ENCODE measurements at regions of chr14 and their contacts with region 1.

Region 1: GRCh38 chr14:76050797-76051392 is 65.3 kb downstream of the IFT43 start:
- DNase-seq: peak; percentile 89
- H3K4me3 Mint-ChIP-seq: no peak overlapping the region
- H3K27ac Mint-ChIP-seq: no peak overlapping the region
- H3K4me1 Mint-ChIP-seq: no peaks in the 10 kb centered on the region
- H3K27me3 Mint-ChIP-seq: no peaks in the 10 kb centered on the region

Region 2: DNA sequence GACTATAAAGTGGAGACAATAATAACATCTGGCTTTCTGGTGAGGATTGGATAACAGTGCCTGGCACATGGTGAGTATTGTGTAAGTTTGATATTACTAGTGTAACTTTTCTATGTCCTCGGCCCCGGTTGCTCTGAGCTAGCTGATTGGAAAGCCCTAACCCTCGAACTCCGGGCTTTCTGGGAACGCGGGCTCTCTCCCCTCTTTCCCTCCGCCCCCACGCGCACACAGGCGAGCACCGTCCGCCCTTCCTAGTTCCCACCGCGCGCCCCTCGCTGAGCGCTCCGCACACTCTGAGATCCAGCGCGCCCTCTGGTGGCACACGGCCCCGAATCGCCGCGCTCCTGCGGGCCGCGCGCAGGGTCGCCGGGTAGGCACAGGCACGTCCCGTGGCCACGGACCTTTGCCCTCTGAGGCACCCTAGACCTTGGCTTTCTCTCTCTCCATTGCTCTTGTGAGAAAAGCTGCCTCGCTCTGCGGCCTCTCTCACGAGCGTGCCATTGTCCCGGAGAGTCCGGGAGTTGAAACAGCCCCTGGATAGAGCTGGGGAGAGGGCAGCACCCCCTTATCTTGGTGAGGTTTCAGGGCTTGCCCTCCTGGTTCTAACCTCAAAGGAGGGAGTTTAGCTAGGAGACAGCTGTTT is 301.9 kb after region 1 on chr14:
- intact Hi-C with region 1: loop called (anchors 1 kb)
- DNase-seq: peak; percentile 88
- H3K4me3 Mint-ChIP-seq: peak overlapping the region; percentile 27
- H3K27ac Mint-ChIP-seq: no peak overlapping the region
- H3K4me1 Mint-ChIP-seq: no peaks in the 10 kb centered on the region
- H3K27me3 Mint-ChIP-seq: peaks cover 16% of the 10 kb centered on the region

Region 3: DNA sequence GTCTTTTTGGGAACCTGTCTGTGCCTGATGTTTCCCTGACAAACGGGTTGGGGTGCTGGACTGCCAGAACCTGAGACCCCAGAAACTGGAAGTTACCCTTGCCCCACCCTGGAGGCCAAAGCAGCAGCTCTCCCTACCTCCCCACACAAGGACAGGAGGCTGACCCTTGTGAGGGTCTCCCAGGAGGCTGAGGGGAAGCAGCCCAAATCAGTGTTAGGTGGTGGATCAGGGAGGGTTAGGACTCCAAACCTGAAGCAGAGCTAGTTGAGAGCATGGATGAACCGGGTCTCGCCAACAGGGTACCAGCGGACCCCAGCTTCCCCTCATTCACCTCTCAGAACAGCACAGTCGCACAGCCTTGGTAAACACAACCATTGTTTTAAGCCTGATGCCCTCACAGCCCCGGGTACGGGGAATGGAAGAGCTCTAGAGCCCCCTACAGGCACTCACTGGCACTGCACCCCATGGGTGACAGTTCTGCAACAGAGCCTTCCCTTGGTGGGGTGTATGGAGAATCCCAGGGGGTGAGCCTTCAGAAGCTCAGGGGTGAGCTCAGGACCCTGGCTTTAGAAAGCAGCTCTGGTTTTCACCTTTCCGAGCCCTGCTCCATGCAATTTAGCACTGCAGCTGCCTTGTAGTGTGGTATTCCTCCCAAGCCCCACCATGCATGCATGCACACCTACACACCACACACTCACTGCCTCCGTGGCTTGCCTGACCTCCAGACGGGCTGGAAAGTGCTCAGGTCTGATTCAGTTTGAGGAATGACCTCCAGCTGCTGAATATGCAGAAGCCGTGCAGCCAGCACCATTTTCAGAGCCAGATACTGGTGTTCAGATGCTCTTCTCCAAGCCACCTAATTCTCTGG is 336.3 kb after region 1 on chr14:
- intact Hi-C with region 1: loop called (anchors 1 kb)
- DNase-seq: peak; percentile 91
- H3K4me3 Mint-ChIP-seq: no peak overlapping the region
- H3K27ac Mint-ChIP-seq: no peak overlapping the region
- H3K4me1 Mint-ChIP-seq: no peaks in the 10 kb centered on the region
- H3K27me3 Mint-ChIP-seq: peaks cover 27% of the 10 kb centered on the region

Region 4: DNA sequence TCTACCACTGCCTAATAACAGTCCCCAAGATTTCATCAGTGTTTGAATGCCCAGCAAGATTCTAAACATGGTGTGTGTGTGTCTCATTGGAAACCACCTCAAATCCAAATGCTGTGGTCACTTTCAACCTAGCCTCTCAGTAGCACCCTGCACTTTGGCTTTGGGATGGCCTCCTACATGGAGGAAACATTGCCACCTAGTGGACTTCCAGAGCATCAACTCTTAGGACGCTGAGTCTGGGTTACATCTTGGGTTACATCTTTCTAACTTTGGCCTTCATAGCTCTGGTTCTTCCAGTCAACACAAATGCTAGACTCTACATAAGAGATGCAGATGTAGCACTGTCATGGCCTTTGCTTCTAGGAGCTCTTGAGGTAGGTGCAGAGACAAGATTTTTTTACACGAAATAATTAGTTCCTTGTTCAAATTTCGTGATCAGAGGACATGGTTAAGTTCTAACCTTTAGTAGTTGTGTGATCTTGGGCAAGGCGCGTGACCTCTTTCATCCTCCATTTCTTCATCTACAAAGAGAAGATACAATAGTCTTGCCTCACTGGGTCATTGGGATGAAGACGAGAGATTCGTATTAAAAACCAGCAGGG is 596.9 kb after region 1 on chr14:
- intact Hi-C with region 1: loop called (anchors 5 kb)
- DNase-seq: peak; percentile 71
- H3K4me3 Mint-ChIP-seq: no peak overlapping the region
- H3K27ac Mint-ChIP-seq: no peak overlapping the region
- H3K4me1 Mint-ChIP-seq: no peaks in the 10 kb centered on the region
- H3K27me3 Mint-ChIP-seq: peaks cover 4% of the 10 kb centered on the region